ENCODE measurements at regions of chr12 and their contacts with region 1.

Region 1: GRCh38 chr12:64392221-64392620 is 1.7 kb upstream of the C12orf56 start:
- DNase-seq: no peak
- H3K4me3 Mint-ChIP-seq: peak overlapping the region; percentile 37
- H3K27ac Mint-ChIP-seq: no peak overlapping the region
- H3K4me1 Mint-ChIP-seq: peaks cover 5% of the 10 kb centered on the region
- H3K27me3 Mint-ChIP-seq: peaks cover 19% of the 10 kb centered on the region

Region 2: DNA sequence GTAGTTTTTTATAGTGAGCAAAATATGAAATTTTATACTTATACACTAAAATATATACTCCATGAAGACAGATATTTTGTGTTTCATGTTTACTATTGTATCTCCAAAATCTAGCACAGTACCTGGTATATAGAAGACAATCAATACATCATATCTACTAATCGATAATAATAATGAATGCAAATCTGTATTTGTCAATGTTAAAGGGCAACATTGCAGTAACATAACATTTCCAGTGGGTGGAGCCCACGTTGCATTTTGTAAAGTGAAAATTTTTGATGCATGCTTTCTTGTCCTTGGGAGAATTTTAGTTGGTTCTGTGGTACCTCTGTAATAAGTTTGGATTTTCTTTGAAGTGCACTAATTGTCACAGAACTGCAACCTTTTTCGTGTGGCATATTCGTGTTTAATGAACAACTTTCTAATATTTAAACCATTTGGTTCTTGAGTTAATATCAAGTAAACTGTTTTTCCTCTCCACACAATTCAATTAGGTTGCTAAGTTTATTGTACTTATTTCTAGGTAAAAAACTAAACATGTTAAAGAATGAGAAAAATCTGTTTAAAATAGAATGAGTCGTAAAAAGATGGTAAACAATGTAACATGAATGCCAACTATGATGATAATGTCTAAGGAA is 1288.6 kb before region 1 on chr12:
- intact Hi-C with region 1: loop called (anchors 5 kb)
- DNase-seq: no peak
- H3K4me3 Mint-ChIP-seq: no peak overlapping the region
- H3K27ac Mint-ChIP-seq: no peak overlapping the region
- H3K4me1 Mint-ChIP-seq: no peaks in the 10 kb centered on the region
- H3K27me3 Mint-ChIP-seq: peaks cover 3% of the 10 kb centered on the region

Region 3: DNA sequence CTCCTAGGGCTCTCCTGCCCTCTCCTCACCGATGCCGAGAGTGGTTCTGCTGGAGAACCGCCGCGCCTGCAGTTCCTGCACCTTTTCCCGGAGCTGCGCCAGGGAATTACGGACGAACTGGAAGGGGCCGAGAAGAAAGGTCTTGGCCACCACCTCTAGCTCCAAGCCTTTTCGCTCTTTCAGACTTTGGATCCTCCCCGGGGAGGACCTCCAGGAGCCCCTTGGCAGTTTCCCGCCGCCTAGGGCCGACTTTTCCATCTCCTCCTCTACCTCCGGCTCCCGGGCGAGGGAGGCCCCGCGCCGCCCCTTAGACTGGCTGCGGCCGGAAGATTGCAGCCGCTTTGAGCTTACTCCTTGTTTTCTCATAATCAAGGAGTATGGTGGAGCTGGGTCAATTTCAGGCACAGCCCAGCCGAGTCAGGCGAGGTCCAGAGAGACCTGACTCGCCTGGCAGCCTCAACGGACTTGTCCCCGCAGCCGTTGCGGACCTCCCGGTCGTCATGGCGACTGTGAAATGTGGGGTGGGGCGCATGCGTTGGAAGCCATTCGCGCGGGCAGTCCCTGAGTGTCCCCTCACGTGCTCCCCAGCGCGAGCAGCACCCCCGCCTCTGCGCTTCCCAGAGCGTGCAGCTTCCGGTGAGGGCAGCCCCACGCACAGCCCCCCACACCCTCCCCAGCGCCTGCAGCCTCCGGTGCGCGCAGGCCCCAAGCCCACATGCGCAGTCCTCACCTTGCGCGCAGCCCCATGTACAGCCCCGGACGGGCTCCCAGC is 724.0 kb before region 1 on chr12 and contains the start of gene DPY19L2:
- intact Hi-C with region 1: loop called (anchors 5 kb)
- DNase-seq: peak; percentile 11
- H3K4me3 Mint-ChIP-seq: peak within 1 kb of the TSS; percentile 79
- H3K27ac Mint-ChIP-seq: no peak within 1 kb of the TSS
- H3K4me1 Mint-ChIP-seq: peaks cover 5% of the 10 kb centered on the region
- H3K27me3 Mint-ChIP-seq: peaks cover 42% of the 10 kb centered on the region
- total RNA-seq, gene DPY19L2: 0.22 and 0.36 TPM in 2 replicates

Region 4: GRCh38 chr12:63826006-63826585 is 566.1 kb before region 1 on chr12:
- intact Hi-C with region 1: loop called (anchors 1 kb)
- DNase-seq: no peak
- H3K4me3 Mint-ChIP-seq: no peak overlapping the region
- H3K27ac Mint-ChIP-seq: no peak overlapping the region
- H3K4me1 Mint-ChIP-seq: peaks cover 8% of the 10 kb centered on the region
- H3K27me3 Mint-ChIP-seq: peaks cover 32% of the 10 kb centered on the region

Region 5: GRCh38 chr12:63843721-63844390 is 548.4 kb before region 1 on chr12:
- intact Hi-C with region 1: loop called (anchors 1 kb)
- DNase-seq: peak; percentile 69
- H3K4me3 Mint-ChIP-seq: peak overlapping the region; percentile 55
- H3K27ac Mint-ChIP-seq: no peak overlapping the region
- H3K4me1 Mint-ChIP-seq: peaks cover 11% of the 10 kb centered on the region
- H3K27me3 Mint-ChIP-seq: peaks cover 44% of the 10 kb centered on the region

Region 6: GRCh38 chr12:64029013-64029857 is 363.0 kb before region 1 on chr12:
- intact Hi-C with region 1: no loop called
- DNase-seq: no peak
- H3K4me3 Mint-ChIP-seq: no peak overlapping the region
- H3K27ac Mint-ChIP-seq: no peak overlapping the region
- H3K4me1 Mint-ChIP-seq: no peaks in the 10 kb centered on the region
- H3K27me3 Mint-ChIP-seq: peaks cover 8% of the 10 kb centered on the region

Region 7: GRCh38 chr12:64273527-64274403 is 118.5 kb before region 1 on chr12:
- intact Hi-C with region 1: loop called (anchors 1 kb)
- DNase-seq: no peak
- H3K4me3 Mint-ChIP-seq: no peak overlapping the region
- H3K27ac Mint-ChIP-seq: no peak overlapping the region
- H3K4me1 Mint-ChIP-seq: no peaks in the 10 kb centered on the region
- H3K27me3 Mint-ChIP-seq: peaks cover 9% of the 10 kb centered on the region

Region 8: GRCh38 chr12:64440100-64440499 is 47.9 kb after region 1 on chr12:
- intact Hi-C with region 1: no loop called
- DNase-seq: no peak
- H3K4me3 Mint-ChIP-seq: no peak overlapping the region
- H3K27ac Mint-ChIP-seq: no peak overlapping the region
- H3K4me1 Mint-ChIP-seq: peaks cover 7% of the 10 kb centered on the region
- H3K27me3 Mint-ChIP-seq: no peaks in the 10 kb centered on the region

Measured in activated T-helper 1 cell treated with anti-CD3 and anti-CD28 coated beads, Interleukin-12 subunit alpha, Interleukin-12 subunit beta, Interleukin-2, Interleukin-4 antibody, amounts not matched to agents 30 ng/mL and 10 ng/mL and 1 ng/mL, durations not matched to agents 14 hours and 24 hours and 36 hours (primary cell).